CD4-positive, alpha-beta memory T cell (primary cell): ENCODE measurements at regions of chr12 and their contacts with region 1.

Region 1: GRCh38 chr12:76519538-76519937 is 40.0 kb downstream of the OSBPL8 start:
- DNase-seq: no peak
- H3K4me3 ChIP-seq: no peak overlapping the region
- H3K4me3 Mint-ChIP-seq: peak overlapping the region in 5 of 8 donors; percentile 2 to 48 (median 25)
- H3K27ac ChIP-seq: no peak overlapping the region
- H3K27ac Mint-ChIP-seq: peak overlapping the region in 4 of 7 donors; percentile 13 to 49 (median 42)
- H3K4me1 ChIP-seq: peaks cover 28% of the 10 kb centered on the region
- H3K4me1 Mint-ChIP-seq: peaks cover 41 to 74% (median 60%) of the 10 kb centered on the region in 4 donors
- H3K27me3 ChIP-seq: no peaks in the 10 kb centered on the region
- H3K27me3 Mint-ChIP-seq: no peaks in the 10 kb centered on the region

Region 2: DNA sequence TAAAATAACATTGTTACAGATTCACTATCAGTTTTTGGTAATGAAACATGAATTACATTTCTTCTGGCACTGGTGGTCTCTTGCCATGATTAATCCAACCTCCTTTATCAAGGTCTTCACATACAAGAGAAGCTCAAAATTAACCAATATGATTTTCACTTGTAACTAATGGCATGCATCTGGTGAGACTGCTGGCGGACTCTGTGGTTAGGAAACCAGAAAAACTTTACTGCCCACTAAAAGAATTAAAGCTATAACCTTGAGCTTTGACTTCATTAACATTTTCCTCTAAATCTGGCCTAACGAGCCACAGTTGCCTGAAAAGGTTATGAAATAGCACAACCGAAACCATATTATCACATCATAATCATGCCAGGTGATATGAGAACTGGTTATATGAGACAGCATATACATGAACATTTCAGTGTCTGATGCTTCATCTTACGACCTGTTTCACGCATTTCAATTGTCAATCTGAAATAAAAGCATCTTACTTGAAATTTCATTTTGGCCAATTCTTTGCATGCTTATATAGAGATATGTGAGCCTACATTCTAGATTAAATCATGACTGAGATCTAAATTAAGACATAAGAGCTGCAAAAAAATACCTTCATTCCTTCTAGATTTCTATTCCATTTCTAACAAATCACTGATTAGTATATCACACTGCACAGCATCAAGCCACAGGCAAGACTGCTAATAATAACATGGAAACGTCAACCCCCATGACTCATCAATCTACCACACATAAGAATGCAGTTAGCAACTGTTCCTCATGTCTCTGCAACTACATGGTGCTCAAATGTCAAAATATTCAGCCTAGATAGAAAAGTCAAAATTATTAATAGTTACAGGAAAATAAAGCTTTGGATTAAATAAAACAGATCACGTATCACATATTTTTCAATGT is 49.3 kb before region 1 on chr12:
- CTCF ChIA-PET with region 1: no interaction called
- POLR2A ChIA-PET with region 1: no interaction called
- intact Hi-C with region 1: loop called (anchors 5 kb)
- DNase-seq: peak in 1 of 5 donors; percentile 41
- H3K4me3 ChIP-seq: no peak overlapping the region
- H3K4me3 Mint-ChIP-seq: no peak overlapping the region
- H3K27ac ChIP-seq: no peak overlapping the region
- H3K27ac Mint-ChIP-seq: no peak overlapping the region
- H3K4me1 ChIP-seq: peaks cover 24% of the 10 kb centered on the region
- H3K4me1 Mint-ChIP-seq: peaks cover 9 to 17% (median 13%) of the 10 kb centered on the region in 4 donors
- H3K27me3 ChIP-seq: no peaks in the 10 kb centered on the region
- H3K27me3 Mint-ChIP-seq: no peaks in the 10 kb centered on the region